ENCODE measurements at regions of chr3 and their contacts with region 1.

Region 1: GRCh38 chr3:134600685-134601463 is 49.9 kb downstream of the KY start:
- DNase-seq: peak; percentile 69
- H3K4me3 Mint-ChIP-seq: no peak overlapping the region
- H3K27ac Mint-ChIP-seq: no peak overlapping the region
- H3K4me1 Mint-ChIP-seq: peaks cover 6% of the 10 kb centered on the region
- H3K27me3 Mint-ChIP-seq: peaks cover 4% of the 10 kb centered on the region

Region 2: GRCh38 chr3:134552784-134553183 is 48.1 kb before region 1 on chr3:
- CTCF ChIA-PET with region 1: no interaction called
- POLR2A ChIA-PET with region 1: no interaction called
- intact Hi-C with region 1: no loop called
- DNase-seq: no peak
- H3K4me3 Mint-ChIP-seq: no peak overlapping the region
- H3K27ac Mint-ChIP-seq: no peak overlapping the region
- H3K4me1 Mint-ChIP-seq: no peaks in the 10 kb centered on the region
- H3K27me3 Mint-ChIP-seq: no peaks in the 10 kb centered on the region

Region 3: DNA sequence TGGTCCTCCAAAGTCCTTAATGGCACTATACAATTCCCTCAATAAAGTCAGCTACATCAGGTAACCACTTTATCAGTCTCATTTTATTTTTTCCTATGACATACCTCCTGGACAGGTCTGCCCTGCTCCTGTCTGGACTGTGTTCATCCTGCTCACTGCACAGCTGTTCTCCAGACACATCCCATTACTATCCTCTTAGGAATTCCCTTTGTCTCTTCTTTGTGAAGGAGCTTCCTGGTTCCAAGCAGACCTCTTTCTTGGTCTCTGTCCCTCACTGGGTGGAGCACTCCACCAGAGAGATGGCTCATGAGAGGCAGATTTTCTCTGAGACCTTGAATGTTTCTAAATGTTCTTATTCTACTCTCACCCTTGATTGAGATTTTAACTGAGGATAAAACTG is 10.1 kb before region 1 on chr3:
- CTCF ChIA-PET with region 1: interaction called, 14 read pairs
- POLR2A ChIA-PET with region 1: no interaction called
- intact Hi-C with region 1: no loop called
- DNase-seq: no peak
- H3K4me3 Mint-ChIP-seq: no peak overlapping the region
- H3K27ac Mint-ChIP-seq: no peak overlapping the region
- H3K4me1 Mint-ChIP-seq: no peaks in the 10 kb centered on the region
- H3K27me3 Mint-ChIP-seq: peaks cover 3% of the 10 kb centered on the region

Region 4: GRCh38 chr3:134640872-134641470 is 40.1 kb after region 1 on chr3:
- CTCF ChIA-PET with region 1: no interaction called
- POLR2A ChIA-PET with region 1: no interaction called
- intact Hi-C with region 1: loop called (anchors 1 kb)
- DNase-seq: no peak
- H3K4me3 Mint-ChIP-seq: no peak overlapping the region
- H3K27ac Mint-ChIP-seq: no peak overlapping the region
- H3K4me1 Mint-ChIP-seq: no peaks in the 10 kb centered on the region
- H3K27me3 Mint-ChIP-seq: no peaks in the 10 kb centered on the region

Region 5: DNA sequence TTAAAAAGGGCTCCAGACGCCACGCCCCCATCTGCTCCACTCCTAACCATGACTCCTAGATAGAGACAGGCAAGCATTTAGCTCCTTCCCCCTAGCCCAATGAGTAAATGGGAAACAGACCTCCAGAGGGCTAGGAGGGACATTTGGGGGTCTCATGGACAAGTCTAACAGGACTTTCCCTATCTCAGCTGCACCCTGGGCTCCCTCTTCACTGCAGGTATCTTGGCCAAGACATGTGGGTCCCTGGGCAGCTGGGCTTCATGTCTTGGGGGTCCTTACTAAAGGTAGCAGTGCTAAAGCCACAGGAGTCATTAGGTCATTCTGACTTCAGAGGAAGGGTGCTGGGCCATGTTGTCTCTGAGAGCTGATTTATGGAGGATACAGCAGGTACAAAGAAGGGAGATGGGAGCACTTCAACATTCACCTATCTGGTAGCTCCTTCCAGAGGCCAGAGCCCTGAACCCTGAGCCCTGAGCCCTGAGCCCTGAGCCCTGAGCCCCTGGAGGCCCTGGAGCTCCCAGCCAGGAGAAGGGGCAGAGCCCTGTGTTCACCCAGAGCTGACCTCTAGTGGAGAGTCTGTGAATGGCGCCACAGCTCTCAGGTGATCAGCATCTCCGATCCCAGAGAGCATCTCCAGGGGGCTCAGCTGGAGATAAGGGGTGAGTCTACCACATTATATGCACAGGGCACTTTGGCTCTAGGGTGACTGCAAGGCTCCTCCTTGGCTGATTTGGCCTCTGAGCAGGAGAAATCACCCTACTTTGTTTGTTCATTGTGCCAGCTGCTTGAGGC is 154.1 kb after region 1 on chr3:
- CTCF ChIA-PET with region 1: interaction called, 24 read pairs
- POLR2A ChIA-PET with region 1: no interaction called
- intact Hi-C with region 1: no loop called
- DNase-seq: peak; percentile 51
- H3K4me3 Mint-ChIP-seq: no peak overlapping the region
- H3K27ac Mint-ChIP-seq: no peak overlapping the region
- H3K4me1 Mint-ChIP-seq: no peaks in the 10 kb centered on the region
- H3K27me3 Mint-ChIP-seq: peaks cover 4% of the 10 kb centered on the region

Region 6: DNA sequence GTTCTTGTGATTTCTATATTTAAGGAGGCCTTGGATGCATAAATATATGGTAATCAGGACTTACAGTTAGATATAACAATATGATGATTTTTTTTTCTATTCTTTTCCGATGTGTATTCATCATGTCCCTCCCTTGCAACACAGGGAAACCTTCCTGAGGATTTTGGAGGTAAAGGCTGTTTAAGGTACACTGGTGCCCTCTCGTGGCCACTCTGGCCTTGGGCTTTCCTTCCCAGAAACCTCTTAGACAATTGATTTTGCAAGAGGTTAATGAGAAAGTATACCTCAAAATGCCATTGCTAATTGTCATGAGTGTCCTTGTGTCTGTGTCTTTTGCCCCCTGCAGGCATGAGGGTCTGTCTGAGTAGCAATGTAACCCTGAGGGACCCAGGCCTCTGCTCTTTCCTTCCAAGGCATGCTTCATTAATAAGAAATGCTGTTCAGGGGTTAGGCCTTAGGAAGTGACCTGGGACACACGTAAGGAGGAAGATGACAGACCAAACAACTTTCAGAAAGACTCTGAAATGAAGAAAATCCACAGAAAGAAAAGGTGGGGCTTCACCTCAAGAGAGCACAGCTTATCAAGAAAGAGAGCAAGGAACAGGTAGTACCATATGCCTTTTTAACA is 1294.3 kb after region 1 on chr3:
- CTCF ChIA-PET with region 1: interaction called, 4 read pairs
- POLR2A ChIA-PET with region 1: no interaction called
- intact Hi-C with region 1: loop called (anchors 2 kb)
- DNase-seq: peak; percentile 57
- H3K4me3 Mint-ChIP-seq: no peak overlapping the region
- H3K27ac Mint-ChIP-seq: no peak overlapping the region
- H3K4me1 Mint-ChIP-seq: no peaks in the 10 kb centered on the region
- H3K27me3 Mint-ChIP-seq: no peaks in the 10 kb centered on the region

Measured in activated CD4-positive, alpha-beta memory T cell treated with anti-CD3 and anti-CD28 coated beads for 36 hours (primary cell).